Activated T-helper 1 cell treated with anti-CD3 and anti-CD28 coated beads, Interleukin-12 subunit alpha, Interleukin-12 subunit beta, Interleukin-2, Interleukin-4 antibody, amounts not matched to agents 30 ng/mL and 10 ng/mL and 1 ng/mL, durations not matched to agents 14 hours and 24 hours and 36 hours (primary cell): ENCODE measurements at regions of chr20 and their contacts with region 1.

Region 1: GRCh38 chr20:36773597-36774390 is at the start of gene DSN1:
- DNase-seq: peak; percentile 98
- H3K4me3 Mint-ChIP-seq: peak within 1 kb of the TSS; percentile 86
- H3K27ac Mint-ChIP-seq: peak within 1 kb of the TSS; percentile 95
- H3K4me1 Mint-ChIP-seq: peaks cover 48% of the 10 kb centered on the region
- H3K27me3 Mint-ChIP-seq: peaks cover 6% of the 10 kb centered on the region
- total RNA-seq, gene DSN1: 23.2 and 29.0 TPM in 2 replicates

Region 2: GRCh38 chr20:36573103-36573794 is 200.5 kb before region 1 on chr20 and contains the start of gene TGIF2:
- intact Hi-C with region 1: loop called (anchors 1 kb)
- DNase-seq: peak; percentile 79
- H3K4me3 Mint-ChIP-seq: peak within 1 kb of the TSS; percentile 96
- H3K27ac Mint-ChIP-seq: peak within 1 kb of the TSS; percentile 97
- H3K4me1 Mint-ChIP-seq: peaks cover 37% of the 10 kb centered on the region
- H3K27me3 Mint-ChIP-seq: peaks cover 3% of the 10 kb centered on the region
- total RNA-seq, gene TGIF2: 50.9 and 55.4 TPM in 2 replicates

Region 3: DNA sequence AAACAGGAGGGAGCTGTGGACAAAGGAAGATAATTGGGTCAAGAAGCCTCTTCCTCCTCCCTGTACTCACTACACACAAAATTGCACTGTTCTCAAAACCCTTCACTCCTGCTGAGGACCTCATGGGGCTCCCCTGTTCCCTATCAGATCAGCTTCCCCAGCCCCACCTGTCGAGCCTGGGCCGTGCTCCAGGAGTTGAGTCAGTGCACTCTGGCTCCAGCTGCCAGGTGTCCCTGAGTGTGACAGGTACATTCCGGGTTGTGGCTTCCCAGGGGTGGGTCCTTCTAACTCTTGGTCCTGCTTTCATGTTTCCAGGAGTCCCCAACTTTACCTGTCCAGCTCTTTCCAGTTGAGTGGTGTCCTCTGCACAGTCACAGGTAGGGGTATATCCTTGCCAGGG is 159.8 kb before region 1 on chr20:
- intact Hi-C with region 1: loop called (anchors 1 kb)
- DNase-seq: no peak
- H3K4me3 Mint-ChIP-seq: no peak overlapping the region
- H3K27ac Mint-ChIP-seq: peak overlapping the region; percentile 52
- H3K4me1 Mint-ChIP-seq: peaks cover 15% of the 10 kb centered on the region
- H3K27me3 Mint-ChIP-seq: no peaks in the 10 kb centered on the region

Region 4: DNA sequence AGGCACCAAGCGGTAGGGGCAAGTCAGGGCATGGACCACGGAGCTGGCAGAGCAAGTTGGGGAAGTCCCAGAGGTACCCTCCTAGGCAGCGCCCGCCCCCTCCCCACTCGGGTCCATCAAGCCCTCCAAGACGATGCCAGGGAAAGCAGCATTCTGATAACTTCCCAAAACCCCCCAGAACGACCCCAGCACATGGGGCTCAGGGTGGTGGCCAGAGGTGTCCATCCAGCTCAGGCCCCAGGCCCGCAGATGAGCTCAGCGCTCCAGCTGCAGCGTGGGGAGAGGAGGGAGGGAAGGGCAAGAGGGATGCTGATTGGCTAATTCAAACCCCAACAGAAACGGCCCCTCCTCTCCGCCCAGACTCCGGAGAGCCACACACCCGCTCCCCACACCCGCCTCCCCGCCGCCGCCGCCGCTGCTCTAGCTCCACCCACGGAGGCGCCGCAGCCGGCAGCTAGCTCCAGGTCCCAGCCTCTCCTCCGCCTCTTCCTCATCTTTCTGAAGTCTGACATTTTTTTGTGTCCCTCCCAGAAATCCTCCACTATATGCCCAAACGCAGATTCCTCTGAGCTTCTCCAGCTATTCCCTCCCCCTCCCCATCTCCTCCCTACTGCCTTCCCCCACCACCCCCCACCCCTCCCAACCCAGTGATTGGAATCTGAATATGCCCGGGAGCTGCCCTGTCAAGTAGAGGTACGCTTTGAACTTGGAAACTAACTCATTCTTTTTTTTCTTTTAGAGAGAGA is 61.8 kb after region 1 on chr20:
- intact Hi-C with region 1: loop called (anchors 1 kb)
- DNase-seq: peak; percentile 84
- H3K4me3 Mint-ChIP-seq: peak overlapping the region; percentile 81
- H3K27ac Mint-ChIP-seq: peak overlapping the region; percentile 89
- H3K4me1 Mint-ChIP-seq: peaks cover 26% of the 10 kb centered on the region
- H3K27me3 Mint-ChIP-seq: peaks cover 2% of the 10 kb centered on the region

Region 5: DNA sequence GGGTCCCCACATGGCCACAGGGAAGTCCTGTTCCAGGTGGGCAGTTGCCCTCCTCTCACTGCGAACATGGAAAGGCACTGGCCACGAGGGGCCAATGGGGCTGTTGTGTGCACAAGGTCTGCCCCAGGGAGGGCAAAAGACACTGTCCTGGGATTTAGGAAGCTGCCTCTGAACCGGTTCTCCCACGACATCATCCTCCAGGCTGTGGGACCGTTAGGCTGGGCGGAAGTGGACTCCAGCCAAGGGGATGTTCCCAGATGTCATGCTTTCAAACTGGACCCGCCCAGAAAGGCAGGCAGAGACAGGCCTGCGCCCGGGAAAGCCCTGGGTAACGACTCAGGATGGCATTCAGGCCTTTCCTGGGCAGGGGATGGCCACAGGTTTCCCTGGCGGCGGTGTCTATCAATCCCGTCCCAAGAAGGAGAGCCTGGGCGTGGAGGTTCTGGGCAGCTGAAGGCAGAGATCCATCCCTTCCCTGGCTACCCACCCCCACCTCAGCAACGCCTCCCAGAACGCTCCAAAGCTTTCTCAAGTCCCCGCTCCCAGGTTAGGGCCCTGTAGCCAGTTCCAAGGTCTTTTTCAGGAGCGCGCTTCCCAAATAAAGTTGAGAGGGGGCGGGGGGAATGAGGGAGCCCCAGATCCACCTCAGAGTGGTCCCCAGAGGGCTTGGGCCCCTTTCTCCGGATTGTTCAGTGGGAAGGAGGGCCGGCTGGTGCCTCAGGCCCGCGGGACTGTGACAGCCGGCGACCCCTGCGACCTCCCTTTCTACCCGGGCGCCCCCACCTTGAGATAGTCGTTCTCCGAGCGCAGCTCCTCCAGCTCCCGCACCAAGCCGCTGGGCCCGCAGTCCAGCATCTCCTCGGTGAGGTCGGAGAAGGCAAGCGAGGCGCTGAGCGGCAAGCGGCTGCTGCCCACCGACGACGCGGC is 88.3 kb after region 1 on chr20:
- intact Hi-C with region 1: loop called (anchors 2 kb)
- DNase-seq: no peak
- H3K4me3 Mint-ChIP-seq: peak overlapping the region; percentile 63
- H3K27ac Mint-ChIP-seq: no peak overlapping the region
- H3K4me1 Mint-ChIP-seq: peaks cover 12% of the 10 kb centered on the region
- H3K27me3 Mint-ChIP-seq: peaks cover 52% of the 10 kb centered on the region